Endothelial cell of umbilical vein (primary cell): ENCODE measurements at regions of chr6 and their contacts with region 1.

Region 1: DNA sequence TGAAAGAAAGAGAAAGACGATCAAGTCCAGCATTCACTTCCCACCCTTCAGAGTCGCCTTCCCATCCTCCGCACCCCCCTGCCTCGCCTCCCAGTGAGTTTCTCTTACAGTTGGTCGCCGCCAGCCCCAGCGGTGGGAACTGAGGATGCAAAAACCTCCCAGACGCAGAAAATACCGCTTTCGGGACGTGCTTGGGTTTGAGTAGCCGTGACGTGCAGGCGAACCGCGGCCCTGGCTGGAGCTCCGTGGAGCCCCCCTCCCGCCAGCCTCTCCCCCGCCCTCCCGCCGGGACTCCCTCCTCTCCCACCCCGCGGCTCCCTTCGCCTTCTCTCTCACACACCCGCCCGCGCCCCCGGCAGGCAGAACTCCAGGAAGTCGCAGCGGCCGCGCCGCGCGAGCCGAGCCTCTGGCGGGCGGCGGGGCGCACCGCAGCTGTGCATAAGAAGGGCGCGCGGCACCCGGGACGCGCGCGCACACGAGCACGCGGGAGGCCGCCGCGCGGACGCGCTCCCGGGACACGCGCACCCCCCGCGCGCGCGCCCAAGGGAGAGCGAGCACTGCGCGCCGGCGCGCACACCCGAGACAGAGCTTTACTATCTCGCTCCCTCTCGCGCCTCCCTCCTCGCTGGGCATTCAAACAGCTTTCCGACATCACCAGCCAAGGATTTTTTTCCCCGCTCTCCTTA is at the start of gene ADGRB3:
- DNase-seq: peak; percentile 42
- H3K4me3 ChIP-seq: peak within 1 kb of the TSS; percentile 21 to 75 (median 50)
- H3K27ac ChIP-seq: no peak within 1 kb of the TSS
- H3K4me1 ChIP-seq: peaks cover 10% of the 10 kb centered on the region
- H3K27me3 ChIP-seq: peaks cover 32 to 50% of the 10 kb centered on the region in 2 experiments
- CTCF ChIP-seq: no peak
- POLR2A ChIP-seq: no peak
- total RNA-seq, gene ADGRB3: not detected in 2 replicates

Region 2: DNA sequence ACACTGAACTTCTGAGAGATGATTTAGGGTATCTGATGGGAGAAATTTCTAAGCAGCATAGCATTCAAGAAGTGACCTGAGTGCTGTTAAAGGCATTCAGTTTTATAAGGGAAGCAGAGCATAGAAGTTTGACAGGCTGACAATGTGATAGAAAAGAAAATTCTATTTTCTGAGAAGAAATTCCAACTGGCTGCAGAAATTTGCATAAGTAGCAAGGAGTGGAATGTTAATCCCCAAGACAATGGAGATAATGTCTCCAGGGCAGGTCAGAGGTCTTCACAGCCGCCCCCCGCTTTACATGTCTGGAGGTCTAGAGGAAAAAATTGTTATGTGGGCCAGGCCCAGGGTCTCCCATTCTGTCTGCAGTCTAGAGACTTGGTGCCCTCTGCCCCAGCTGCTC is 1566.1 kb before region 1 on chr6:
- CTCF ChIA-PET with region 1: no interaction called
- POLR2A ChIA-PET with region 1: no interaction called
- dilution Hi-C with region 1: no loop called
- intact Hi-C with region 1: loop called (anchors 5 kb)
- DNase-seq: no peak
- H3K4me3 ChIP-seq: no peak overlapping the region
- H3K27ac ChIP-seq: no peak overlapping the region
- H3K4me1 ChIP-seq: no peaks in the 10 kb centered on the region
- H3K27me3 ChIP-seq: no peaks in the 10 kb centered on the region
- CTCF ChIP-seq: no peak
- POLR2A ChIP-seq: no peak

Region 3: DNA sequence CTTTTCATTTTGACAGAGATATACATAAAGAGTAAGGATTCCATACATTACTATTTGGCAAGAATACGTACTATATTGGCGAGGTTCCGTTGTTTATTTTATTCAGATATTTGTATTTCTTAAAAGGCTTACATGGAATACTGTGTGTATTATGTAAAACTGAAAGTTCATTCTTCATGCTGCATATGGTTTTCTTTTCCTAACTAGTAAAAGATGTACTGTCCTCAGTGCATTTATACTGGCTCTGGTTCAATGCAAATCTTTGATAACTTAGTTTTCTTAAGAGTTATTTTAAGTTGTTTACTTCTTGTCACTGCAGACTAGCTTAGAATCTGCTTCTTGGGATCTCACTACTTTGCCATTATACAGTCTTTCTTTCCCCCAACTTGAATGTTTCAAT is 42.2 kb after region 1 on chr6:
- CTCF ChIA-PET with region 1: no interaction called
- POLR2A ChIA-PET with region 1: no interaction called
- dilution Hi-C with region 1: no loop called
- intact Hi-C with region 1: no loop called
- DNase-seq: no peak
- H3K4me3 ChIP-seq: no peak overlapping the region
- H3K27ac ChIP-seq: no peak overlapping the region
- H3K4me1 ChIP-seq: no peaks in the 10 kb centered on the region
- H3K27me3 ChIP-seq: no peaks in the 10 kb centered on the region
- CTCF ChIP-seq: no peak
- POLR2A ChIP-seq: no peak

Region 4: DNA sequence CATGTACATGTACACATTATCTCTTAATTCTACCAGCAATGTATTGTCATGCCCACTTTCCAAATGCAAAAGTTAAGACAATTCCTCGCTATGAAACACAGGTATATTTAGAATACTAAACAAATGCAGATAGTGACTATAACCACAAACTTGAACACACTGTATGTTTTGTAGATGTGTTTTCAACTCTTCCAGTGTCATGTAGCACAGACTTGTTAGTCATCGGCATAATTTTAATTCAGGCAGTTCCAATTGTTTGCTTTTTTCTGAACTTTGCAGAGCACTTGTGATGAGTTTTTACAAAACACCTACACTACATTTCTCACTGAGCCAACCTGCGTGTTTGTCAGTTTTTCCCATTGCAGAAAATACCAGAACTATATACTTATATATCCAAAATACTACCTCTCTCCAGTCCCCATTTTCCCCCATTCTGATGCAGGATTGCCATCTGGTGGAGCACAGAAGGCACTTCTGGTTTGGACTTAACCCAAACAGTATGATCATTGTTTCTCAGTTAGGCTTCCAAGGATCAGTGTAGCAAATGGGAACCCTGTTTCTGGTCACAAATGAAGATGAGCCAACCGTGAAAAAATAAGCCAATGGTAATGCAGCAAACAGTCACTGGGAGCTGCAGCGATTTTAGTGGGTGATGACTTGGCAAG is 143.6 kb after region 1 on chr6:
- CTCF ChIA-PET with region 1: no interaction called
- POLR2A ChIA-PET with region 1: no interaction called
- dilution Hi-C with region 1: no loop called
- intact Hi-C with region 1: loop called (anchors 5 kb)
- DNase-seq: no peak
- H3K4me3 ChIP-seq: no peak overlapping the region
- H3K27ac ChIP-seq: no peak overlapping the region
- H3K4me1 ChIP-seq: no peaks in the 10 kb centered on the region
- H3K27me3 ChIP-seq: no peaks in the 10 kb centered on the region
- CTCF ChIP-seq: no peak
- POLR2A ChIP-seq: no peak

Region 5: GRCh38 chr6:68967549-68968300 is 332.9 kb after region 1 on chr6:
- CTCF ChIA-PET with region 1: no interaction called
- POLR2A ChIA-PET with region 1: no interaction called
- dilution Hi-C with region 1: no loop called
- intact Hi-C with region 1: loop called (anchors 1 kb)
- DNase-seq: peak; percentile 46
- H3K4me3 ChIP-seq: no peak overlapping the region
- H3K27ac ChIP-seq: no peak overlapping the region
- H3K4me1 ChIP-seq: no peaks in the 10 kb centered on the region
- H3K27me3 ChIP-seq: no peaks in the 10 kb centered on the region
- CTCF ChIP-seq: peak; percentile 70 to 73
- POLR2A ChIP-seq: no peak

Region 6: DNA sequence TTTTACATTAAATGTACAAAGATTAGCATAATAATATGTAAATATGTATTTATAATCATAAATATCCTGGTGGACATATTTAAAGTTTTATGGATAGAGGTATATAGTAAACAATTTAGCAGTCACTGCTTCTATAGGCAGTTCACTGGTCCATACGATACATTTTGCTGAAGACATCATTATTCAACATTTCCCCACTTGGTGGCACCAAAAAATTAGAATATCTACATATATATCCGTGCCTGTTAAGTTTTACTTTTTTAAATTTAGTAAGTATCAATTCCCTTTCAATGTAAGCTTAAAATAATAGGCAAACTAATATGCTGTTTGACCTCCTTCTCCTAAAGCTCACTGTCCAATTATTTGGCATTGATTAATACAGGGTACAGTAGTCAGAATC is 1097.8 kb after region 1 on chr6:
- CTCF ChIA-PET with region 1: interaction called, 9 read pairs
- POLR2A ChIA-PET with region 1: no interaction called
- dilution Hi-C with region 1: no loop called
- intact Hi-C with region 1: loop called (anchors 5 kb)
- DNase-seq: peak; percentile 9
- H3K4me3 ChIP-seq: no peak overlapping the region
- H3K27ac ChIP-seq: no peak overlapping the region
- H3K4me1 ChIP-seq: no peaks in the 10 kb centered on the region
- H3K27me3 ChIP-seq: no peaks in the 10 kb centered on the region
- CTCF ChIP-seq: no peak
- POLR2A ChIP-seq: no peak

Region 7: GRCh38 chr6:70107852-70108629 is 1473.2 kb after region 1 on chr6:
- CTCF ChIA-PET with region 1: interaction called, 10 read pairs
- POLR2A ChIA-PET with region 1: no interaction called
- dilution Hi-C with region 1: no loop called
- intact Hi-C with region 1: loop called (anchors 1 kb)
- DNase-seq: peak; percentile 26
- H3K4me3 ChIP-seq: no peak overlapping the region
- H3K27ac ChIP-seq: no peak overlapping the region
- H3K4me1 ChIP-seq: no peaks in the 10 kb centered on the region
- H3K27me3 ChIP-seq: no peaks in the 10 kb centered on the region
- CTCF ChIP-seq: peak; percentile 33 to 35
- POLR2A ChIP-seq: no peak